Activated B cell treated with CpG ODN at 0.5 μM for 24 hours (primary cell): ENCODE measurements at regions of chr17 and their contacts with region 1.

Region 1: GRCh38 chr17:77109764-77110359 is 30.9 kb upstream of the SEC14L1 start:
- DNase-seq: no peak
- ATAC-seq: peak; percentile 23
- H3K4me3 Mint-ChIP-seq: peak overlapping the region; percentile 53
- H3K27ac Mint-ChIP-seq: peak overlapping the region; percentile 38
- H3K4me1 Mint-ChIP-seq: peaks cover 56% of the 10 kb centered on the region
- H3K27me3 Mint-ChIP-seq: no peaks in the 10 kb centered on the region
- CTCF ChIP-seq: no peak

Region 2: GRCh38 chr17:76883744-76884525 is 225.9 kb before region 1 on chr17:
- CTCF ChIA-PET with region 1: no interaction called
- POLR2A ChIA-PET with region 1: interaction called, 10 read pairs
- intact Hi-C with region 1: no loop called
- DNase-seq: no peak
- ATAC-seq: no peak
- H3K4me3 Mint-ChIP-seq: no peak overlapping the region
- H3K27ac Mint-ChIP-seq: no peak overlapping the region
- H3K4me1 Mint-ChIP-seq: no peaks in the 10 kb centered on the region
- H3K27me3 Mint-ChIP-seq: peaks cover 11% of the 10 kb centered on the region
- CTCF ChIP-seq: no peak

Region 3: GRCh38 chr17:77036807-77037381 is 73.0 kb before region 1 on chr17:
- CTCF ChIA-PET with region 1: no interaction called
- POLR2A ChIA-PET with region 1: no interaction called
- intact Hi-C with region 1: no loop called
- DNase-seq: no peak
- ATAC-seq: no peak
- H3K4me3 Mint-ChIP-seq: no peak overlapping the region
- H3K27ac Mint-ChIP-seq: no peak overlapping the region
- H3K4me1 Mint-ChIP-seq: peaks cover 15% of the 10 kb centered on the region
- H3K27me3 Mint-ChIP-seq: peaks cover 26% of the 10 kb centered on the region
- CTCF ChIP-seq: no peak

Region 4: GRCh38 chr17:77054936-77055335 is 54.9 kb before region 1 on chr17:
- CTCF ChIA-PET with region 1: no interaction called
- POLR2A ChIA-PET with region 1: no interaction called
- intact Hi-C with region 1: no loop called
- DNase-seq: no peak
- ATAC-seq: no peak
- H3K4me3 Mint-ChIP-seq: no peak overlapping the region
- H3K27ac Mint-ChIP-seq: no peak overlapping the region
- H3K4me1 Mint-ChIP-seq: peaks cover 3% of the 10 kb centered on the region
- H3K27me3 Mint-ChIP-seq: peaks cover 32% of the 10 kb centered on the region
- CTCF ChIP-seq: no peak

Region 5: DNA sequence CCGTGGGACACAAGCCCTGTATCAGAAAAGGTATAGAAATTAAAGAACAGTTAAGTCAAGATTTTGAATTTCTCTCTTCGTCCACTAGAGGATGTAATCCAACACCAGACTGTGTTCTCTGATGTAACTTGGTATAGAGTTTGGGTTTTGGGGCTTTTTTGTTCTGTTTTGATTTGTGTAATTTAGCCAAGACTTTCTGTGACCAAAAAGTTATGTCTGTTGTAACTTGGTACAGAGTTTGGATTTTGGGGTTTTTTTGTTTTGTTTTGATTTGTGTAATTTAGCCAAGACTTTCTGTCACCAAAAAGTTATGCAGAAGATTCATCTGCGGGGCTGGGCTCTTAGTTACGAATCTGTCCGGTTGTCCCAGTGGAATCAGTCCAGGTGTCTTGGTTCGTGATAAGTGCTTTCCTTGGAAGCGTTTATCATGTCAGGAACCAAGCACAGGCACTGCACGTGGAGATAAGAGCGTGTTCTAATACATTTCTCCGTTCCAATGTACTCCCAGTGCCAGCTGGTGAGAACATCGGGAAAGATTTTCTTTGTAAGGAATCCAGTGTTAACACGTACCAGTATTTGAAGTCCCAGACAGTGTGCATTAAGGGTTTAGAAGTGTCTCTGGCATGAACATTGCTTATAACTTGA is 13.2 kb before region 1 on chr17:
- CTCF ChIA-PET with region 1: no interaction called
- POLR2A ChIA-PET with region 1: no interaction called
- intact Hi-C with region 1: no loop called
- DNase-seq: no peak
- ATAC-seq: peak; percentile 56
- H3K4me3 Mint-ChIP-seq: no peak overlapping the region
- H3K27ac Mint-ChIP-seq: peak overlapping the region; percentile 50
- H3K4me1 Mint-ChIP-seq: peaks cover 21% of the 10 kb centered on the region
- H3K27me3 Mint-ChIP-seq: no peaks in the 10 kb centered on the region
- CTCF ChIP-seq: no peak

Region 6: GRCh38 chr17:77200711-77201110 is 90.8 kb after region 1 on chr17:
- CTCF ChIA-PET with region 1: no interaction called
- POLR2A ChIA-PET with region 1: no interaction called
- intact Hi-C with region 1: no loop called
- DNase-seq: no peak
- ATAC-seq: no peak
- H3K4me3 Mint-ChIP-seq: no peak overlapping the region
- H3K27ac Mint-ChIP-seq: no peak overlapping the region
- H3K4me1 Mint-ChIP-seq: peaks cover 5% of the 10 kb centered on the region
- H3K27me3 Mint-ChIP-seq: no peaks in the 10 kb centered on the region
- CTCF ChIP-seq: no peak